Lower leg skin (tissue), 4 donors: ENCODE measurements at regions of chr9 and their contacts with region 1.

Region 1: DNA sequence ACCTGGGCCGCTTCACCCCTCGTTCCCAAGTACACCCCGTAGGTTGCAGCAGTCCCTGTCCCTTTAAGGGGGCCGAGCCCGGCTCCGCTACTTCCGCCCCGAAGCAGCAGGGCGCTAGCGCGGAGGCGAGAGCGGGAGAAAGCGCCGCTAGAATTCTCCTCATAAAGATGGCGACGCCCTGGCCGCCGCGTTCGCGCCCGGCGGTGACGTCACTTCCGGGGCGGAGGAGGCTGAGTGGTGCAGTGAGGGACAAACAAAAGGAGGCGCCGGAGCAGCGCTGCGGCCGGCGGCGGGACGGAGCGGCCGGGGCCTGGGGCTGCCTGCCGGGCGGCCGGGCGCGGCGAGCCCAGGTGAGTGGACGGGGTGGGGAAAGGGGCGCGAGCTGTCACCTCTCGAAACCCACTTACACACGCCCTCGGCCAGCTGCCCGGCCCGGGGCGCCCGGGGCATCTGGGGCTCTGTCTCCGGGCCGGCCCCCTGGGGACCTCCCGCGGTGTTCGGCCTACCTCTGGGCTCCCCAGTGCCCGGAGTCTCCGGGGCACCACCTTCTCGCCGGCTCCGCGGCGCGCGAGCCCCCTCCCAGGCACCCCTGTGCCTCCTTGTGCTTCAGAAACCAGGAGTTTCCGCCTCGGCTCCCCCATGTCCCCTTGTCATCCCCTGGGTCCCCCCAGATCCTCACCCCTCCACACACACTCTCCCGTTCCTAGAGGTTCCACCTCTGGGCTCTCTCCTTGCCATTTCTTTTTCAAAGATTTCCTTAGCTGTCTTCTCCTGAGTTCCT is at the starts of genes KYAT1 and LRRC8A:
- DNase-seq: peak; percentile 96 to 100
- H3K4me3 ChIP-seq: peak within 1 kb of the TSS; percentile 88
- CTCF ChIP-seq: no peak
- POLR2A ChIP-seq: no peak
- total RNA-seq, gene KYAT1: 8.2 to 19.4 (median 10.9) TPM
- total RNA-seq, gene LRRC8A: 89.6 to 131 (median 111) TPM

Region 2: GRCh38 chr9:128540634-128541360 is 341.3 kb before region 1 on chr9:
- intact Hi-C with region 1: no loop called
- DNase-seq: no peak
- H3K4me3 ChIP-seq: no peak overlapping the region
- CTCF ChIP-seq: no peak
- POLR2A ChIP-seq: no peak

Region 3: DNA sequence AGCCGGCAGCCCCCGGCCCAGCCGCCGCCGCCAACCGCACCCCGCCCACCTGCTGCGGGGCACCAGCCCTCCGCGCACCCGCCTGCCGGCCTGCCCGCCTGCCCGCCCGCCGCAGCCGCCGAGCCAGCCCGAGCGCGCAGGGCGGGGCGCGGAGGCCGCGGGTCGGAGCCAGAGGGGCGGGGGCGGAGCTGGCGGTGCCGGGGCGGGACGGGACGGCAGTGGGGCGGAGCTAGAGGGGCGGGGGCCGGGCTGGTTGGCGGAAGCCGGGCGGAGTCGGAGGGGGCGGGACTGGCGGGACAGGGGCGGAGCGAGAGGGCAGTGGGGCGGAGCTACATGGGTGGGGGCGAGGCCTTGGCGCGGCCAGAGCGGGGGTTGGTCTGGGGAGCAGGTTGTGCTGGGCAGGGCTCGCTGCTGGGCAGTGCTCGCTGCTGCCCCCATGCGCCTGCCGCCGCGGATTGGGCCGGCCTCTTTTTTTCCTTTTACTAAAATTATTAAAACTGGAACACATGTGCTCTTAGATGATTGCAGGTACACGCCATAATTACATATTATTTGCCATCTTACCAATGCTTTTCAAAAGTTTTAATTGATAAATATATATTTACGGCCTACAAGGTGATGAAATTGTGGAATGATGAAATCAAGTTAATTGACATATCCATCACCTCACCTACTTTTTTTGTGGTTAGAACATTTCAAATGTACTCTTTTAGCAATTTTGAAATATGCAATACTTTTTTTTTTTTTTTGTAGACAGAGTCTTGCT is 146.3 kb after region 1 on chr9 and contains the start of gene SH3GLB2:
- intact Hi-C with region 1: loop called (anchors 5 kb)
- DNase-seq: peak; percentile 89 to 99
- H3K4me3 ChIP-seq: peak within 1 kb of the TSS; percentile 73
- CTCF ChIP-seq: no peak
- POLR2A ChIP-seq: no peak
- total RNA-seq, gene SH3GLB2: 177 to 378 (median 207) TPM

Region 4: DNA sequence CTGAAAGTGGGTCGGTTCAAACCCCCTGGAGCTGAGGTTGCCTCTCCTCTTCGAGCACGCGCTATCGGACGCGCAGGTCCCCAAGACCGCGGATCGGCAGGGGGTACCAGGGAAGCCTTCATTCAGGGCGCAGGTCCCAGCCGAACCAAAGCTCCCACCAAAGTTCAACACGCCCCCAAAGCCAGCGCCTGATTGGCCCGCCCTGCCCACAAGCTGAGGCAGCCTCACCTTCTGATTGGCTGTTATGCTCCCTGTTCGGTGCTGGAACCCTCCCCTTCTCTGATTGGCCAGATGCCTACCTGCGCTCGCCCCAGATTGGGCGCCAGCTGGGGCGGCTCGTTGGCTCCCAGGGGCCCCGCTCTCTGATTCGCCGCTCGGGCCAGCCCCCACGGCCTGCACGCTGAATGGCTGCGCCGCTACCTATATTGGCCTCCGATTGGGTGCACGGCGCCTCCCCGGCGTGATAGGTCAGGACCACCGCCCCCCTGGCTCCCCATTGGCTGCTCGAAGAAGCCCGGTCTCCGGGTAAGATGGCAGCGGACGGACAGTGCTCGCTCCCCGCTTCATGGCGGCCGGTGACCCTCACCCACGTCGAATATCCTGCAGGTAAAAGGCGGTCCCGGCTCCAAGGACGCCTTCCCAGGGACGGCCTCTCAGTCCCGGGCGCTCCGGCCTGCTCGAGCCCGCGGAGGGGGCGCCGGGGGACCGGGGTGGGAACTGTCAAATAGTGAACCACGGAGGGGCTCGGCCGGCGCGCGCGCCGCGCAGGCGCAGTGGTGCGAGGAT is 198.7 kb after region 1 on chr9 and contains the start of gene DOLPP1:
- intact Hi-C with region 1: no loop called
- DNase-seq: peak; percentile 98 to 100
- H3K4me3 ChIP-seq: peak within 1 kb of the TSS; percentile 54
- CTCF ChIP-seq: peak in 1 of 3 donors; percentile 9
- POLR2A ChIP-seq: no peak
- total RNA-seq, gene DOLPP1: 7.5 to 14.0 (median 10.7) TPM